Naive thymus-derived CD4-positive, alpha-beta T cell (primary cell): ENCODE measurements at regions of chr9 and their contacts with region 1.

Region 1: GRCh38 chr9:72292256-72292682 is 72.7 kb downstream of the ZFAND5 start:
- DNase-seq: peak in 5 of 9 donors; percentile 12 to 35 (median 27)
- ATAC-seq: peak; percentile 60
- H3K4me3 ChIP-seq: no peak overlapping the region
- H3K4me3 Mint-ChIP-seq: no peak overlapping the region
- H3K27ac ChIP-seq: no peak overlapping the region
- H3K27ac Mint-ChIP-seq: no peak overlapping the region
- H3K4me1 ChIP-seq: no peaks in the 10 kb centered on the region
- H3K4me1 Mint-ChIP-seq: peaks cover 0 to 7% (median 0%) of the 10 kb centered on the region in 7 donors
- H3K27me3 ChIP-seq: no peaks in the 10 kb centered on the region
- H3K27me3 Mint-ChIP-seq: peaks cover 0 to 21% (median 6%) of the 10 kb centered on the region in 5 donors

Region 2: GRCh38 chr9:72203205-72203803 is 89.0 kb before region 1 on chr9:
- CTCF ChIA-PET with region 1: no interaction called
- POLR2A ChIA-PET with region 1: no interaction called
- intact Hi-C with region 1: no loop called
- DNase-seq: no peak
- ATAC-seq: no peak
- H3K4me3 ChIP-seq: no peak overlapping the region
- H3K4me3 Mint-ChIP-seq: no peak overlapping the region
- H3K27ac ChIP-seq: no peak overlapping the region
- H3K27ac Mint-ChIP-seq: no peak overlapping the region
- H3K4me1 ChIP-seq: no peaks in the 10 kb centered on the region
- H3K4me1 Mint-ChIP-seq: peaks cover 0 to 3% (median 0%) of the 10 kb centered on the region in 7 donors
- H3K27me3 ChIP-seq: no peaks in the 10 kb centered on the region
- H3K27me3 Mint-ChIP-seq: peaks cover 6 to 13% (median 8%) of the 10 kb centered on the region in 5 donors

Region 3: DNA sequence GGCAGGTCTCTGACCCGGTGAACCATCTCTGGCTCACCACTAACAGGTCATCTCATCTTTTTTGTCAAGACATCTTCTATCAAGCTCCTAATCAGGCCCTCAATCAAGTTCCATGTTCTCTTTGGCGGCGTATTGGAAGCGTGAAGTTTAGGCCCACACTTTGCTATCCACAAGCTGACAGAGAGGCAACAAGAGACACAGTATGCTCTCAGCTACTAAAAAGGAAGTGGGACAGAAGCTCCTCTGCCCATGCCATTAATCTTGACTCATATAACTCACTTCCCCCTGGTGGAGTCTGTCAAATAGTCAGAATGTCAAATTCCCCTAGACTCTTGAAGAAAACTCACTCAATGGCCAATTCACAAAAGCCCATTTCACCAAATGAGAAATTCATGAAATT is 151.6 kb after region 1 on chr9:
- CTCF ChIA-PET with region 1: no interaction called
- POLR2A ChIA-PET with region 1: no interaction called
- intact Hi-C with region 1: loop called in 1 of 2 experiments (anchors 10 kb)
- DNase-seq: no peak
- ATAC-seq: peak; percentile 80
- H3K4me3 ChIP-seq: no peak overlapping the region
- H3K4me3 Mint-ChIP-seq: peak overlapping the region in 2 of 10 donors; percentile 45 to 58
- H3K27ac ChIP-seq: no peak overlapping the region
- H3K27ac Mint-ChIP-seq: peak overlapping the region in 3 of 9 donors; percentile 28 to 80 (median 61)
- H3K4me1 ChIP-seq: peaks cover 0 to 11% of the 10 kb centered on the region in 2 donors
- H3K4me1 Mint-ChIP-seq: peaks cover 4 to 44% (median 14%) of the 10 kb centered on the region in 7 donors
- H3K27me3 ChIP-seq: no peaks in the 10 kb centered on the region
- H3K27me3 Mint-ChIP-seq: peaks cover 0 to 2% (median 0%) of the 10 kb centered on the region in 5 donors

Region 4: DNA sequence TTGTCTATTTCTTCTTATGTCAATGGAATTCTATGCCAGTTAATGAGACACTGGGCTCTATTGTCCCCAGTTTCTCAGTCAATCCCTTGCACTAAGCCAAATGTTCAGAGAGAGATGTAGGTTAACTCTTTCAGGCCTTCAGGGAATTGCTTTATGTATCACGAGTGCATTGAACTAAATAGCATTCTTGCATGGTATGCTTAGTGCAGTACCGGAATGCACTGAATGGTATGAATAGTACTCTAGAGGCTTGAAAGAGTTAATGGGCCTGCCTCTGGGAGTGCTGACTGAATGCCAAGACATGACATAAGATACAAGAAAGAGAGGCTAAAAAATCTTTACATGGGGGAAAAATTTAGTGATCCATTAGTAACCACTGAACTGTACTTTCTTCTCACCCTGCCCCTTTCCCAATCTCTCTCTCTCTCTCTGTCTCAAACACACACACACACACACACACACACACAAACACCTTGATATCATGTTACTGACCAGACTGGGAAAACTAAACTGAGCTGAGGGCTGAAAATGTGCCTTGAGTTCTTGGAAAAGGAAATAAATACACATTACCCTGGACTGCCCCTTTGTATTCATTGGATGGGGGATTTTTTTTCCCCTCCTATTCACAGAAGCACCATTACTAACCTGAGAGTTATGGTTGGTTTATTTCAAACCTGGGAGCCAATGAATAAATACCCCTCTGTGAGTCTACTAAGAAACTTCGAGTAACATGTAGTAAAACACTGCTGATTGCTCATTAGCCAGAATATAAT is 193.7 kb after region 1 on chr9:
- CTCF ChIA-PET with region 1: no interaction called
- POLR2A ChIA-PET with region 1: no interaction called
- intact Hi-C with region 1: loop called in 1 of 2 experiments (anchors 10 kb)
- DNase-seq: no peak
- ATAC-seq: no peak
- H3K4me3 ChIP-seq: no peak overlapping the region
- H3K4me3 Mint-ChIP-seq: no peak overlapping the region
- H3K27ac ChIP-seq: no peak overlapping the region
- H3K27ac Mint-ChIP-seq: no peak overlapping the region
- H3K4me1 ChIP-seq: no peaks in the 10 kb centered on the region
- H3K4me1 Mint-ChIP-seq: peaks cover 0 to 9% (median 0%) of the 10 kb centered on the region in 7 donors
- H3K27me3 ChIP-seq: no peaks in the 10 kb centered on the region
- H3K27me3 Mint-ChIP-seq: peaks cover 0 to 8% (median 4%) of the 10 kb centered on the region in 5 donors